K562 (cell line): ENCODE measurements at regions of chr19 and their contacts with region 1.

Region 1: DNA sequence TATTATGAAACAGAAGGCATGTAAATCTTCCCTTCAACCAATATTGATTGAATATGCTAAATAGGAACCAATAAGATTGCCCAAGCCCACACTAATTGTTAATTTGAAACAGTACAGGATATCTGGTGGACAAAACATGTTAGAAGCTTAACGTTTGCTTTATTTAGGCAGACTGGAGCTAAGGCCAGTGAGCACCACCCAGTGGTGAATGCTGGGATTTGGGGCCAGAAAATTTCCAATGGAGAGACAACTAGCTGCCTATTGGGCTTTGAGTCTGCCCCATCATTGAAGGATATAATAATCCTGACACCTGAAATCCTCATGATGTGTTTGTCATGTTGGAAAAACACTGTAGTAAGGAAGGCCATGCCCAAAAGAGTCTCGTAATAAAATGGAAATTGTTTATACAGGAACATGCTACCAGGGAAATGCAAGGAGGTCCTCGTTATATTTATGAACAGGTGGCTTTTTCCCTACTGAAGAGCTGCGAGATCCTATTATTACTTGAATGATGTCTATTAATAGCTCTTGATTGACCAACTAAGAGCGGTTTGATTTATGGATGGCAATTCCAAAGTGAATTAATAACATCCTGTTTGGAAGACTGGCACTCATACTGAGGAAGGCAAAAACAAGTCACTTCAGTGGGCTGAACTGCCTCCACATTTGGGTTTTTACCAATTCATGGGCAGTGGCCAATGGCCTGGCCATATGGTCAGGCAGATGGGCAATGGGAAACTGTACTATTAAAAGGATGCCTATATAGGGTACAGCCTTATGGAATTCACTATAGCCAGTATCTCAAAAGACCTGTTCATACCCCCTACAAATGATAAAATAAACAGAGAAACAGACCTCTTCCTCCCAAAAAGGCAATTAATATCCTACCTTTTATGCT is 8.7 kb downstream of the SIGLECL1 start:
- DNase-seq: peak; percentile 48 to 74 (median 60)
- ATAC-seq: peak; percentile 83
- H3K4me3 ChIP-seq: no peak overlapping the region
- H3K27ac ChIP-seq: no peak overlapping the region
- H3K4me1 ChIP-seq: peaks cover 4 to 12% of the 10 kb centered on the region in 2 experiments; a peak in 3 of 5 replicates
- H3K27me3 ChIP-seq: peaks cover 14 to 18% of the 10 kb centered on the region in 2 experiments; a peak in 4 of 5 replicates
- CTCF ChIP-seq: peak; percentile 87 to 96 (median 91)
- EP300 ChIP-seq: no peak
- POLR2A ChIP-seq: no peak
- RAD21 ChIP-seq: peak; percentile 88 to 96

Region 2: DNA sequence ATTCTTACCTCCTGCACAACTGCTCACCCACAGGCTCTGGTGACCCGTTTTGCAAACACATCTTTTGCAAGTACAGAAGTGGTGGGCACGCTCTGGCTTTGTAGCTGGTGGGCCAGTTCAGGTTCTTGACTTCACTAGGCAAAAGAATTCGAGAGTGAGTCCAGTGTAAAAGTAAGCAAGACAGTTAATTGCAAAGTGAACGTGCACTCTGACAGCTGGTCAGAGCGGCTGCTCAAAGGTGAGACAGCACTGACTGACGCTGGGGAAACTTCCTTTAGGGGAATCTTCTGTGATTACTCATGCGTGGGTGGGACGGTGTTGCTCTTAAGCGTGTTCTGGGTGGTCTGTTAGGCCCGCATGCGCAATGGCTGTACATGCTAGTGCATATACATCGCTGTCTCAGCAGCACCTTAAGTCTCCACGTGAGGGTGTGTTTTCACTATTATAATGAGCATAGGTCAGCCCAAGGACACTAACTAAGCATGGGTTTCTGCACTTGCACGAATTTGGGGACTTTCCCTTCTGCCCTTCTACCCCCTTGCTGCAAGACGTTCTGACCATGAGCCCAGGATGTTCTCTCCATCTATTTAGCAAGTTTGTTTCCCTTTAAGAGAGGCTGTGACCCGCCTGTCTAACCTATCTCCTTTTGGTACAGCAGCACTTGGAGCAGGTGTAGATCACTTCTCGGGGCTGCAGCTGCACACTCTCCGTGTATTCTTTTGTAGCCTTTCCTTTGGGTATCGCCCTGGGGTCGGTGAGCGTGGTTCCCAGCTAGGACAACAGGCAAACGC is 64.9 kb before region 1 on chr19:
- CTCF ChIA-PET with region 1: no interaction called
- POLR2A ChIA-PET with region 1: no interaction called
- in situ Hi-C with region 1: no loop called
- intact Hi-C with region 1: loop called (anchors 2 kb)
- DNase-seq: peak in 1 of 4 experiments; percentile 45
- ATAC-seq: peak; percentile 86
- H3K4me3 ChIP-seq: no peak overlapping the region
- H3K27ac ChIP-seq: no peak overlapping the region
- H3K4me1 ChIP-seq: peaks cover 4 to 11% of the 10 kb centered on the region in 2 experiments; a peak in 3 of 5 replicates
- H3K27me3 ChIP-seq: peaks cover 10 to 58% of the 10 kb centered on the region in 2 experiments; a peak in 3 of 5 replicates
- CTCF ChIP-seq: peak in 2 of 3 experiments; percentile 25 to 28; a peak in 1 of 6 replicates
- EP300 ChIP-seq: no peak
- POLR2A ChIP-seq: no peak
- RAD21 ChIP-seq: peak; percentile 17 to 45; a peak in 3 of 4 replicates